ACHN (cell line): ENCODE measurements at regions of chr3 and their contacts with region 1.

Region 1: GRCh38 chr3:187739561-187740332 is 5.5 kb downstream of the BCL6 start:
- DNase-seq: peak; percentile 80

Region 2: DNA sequence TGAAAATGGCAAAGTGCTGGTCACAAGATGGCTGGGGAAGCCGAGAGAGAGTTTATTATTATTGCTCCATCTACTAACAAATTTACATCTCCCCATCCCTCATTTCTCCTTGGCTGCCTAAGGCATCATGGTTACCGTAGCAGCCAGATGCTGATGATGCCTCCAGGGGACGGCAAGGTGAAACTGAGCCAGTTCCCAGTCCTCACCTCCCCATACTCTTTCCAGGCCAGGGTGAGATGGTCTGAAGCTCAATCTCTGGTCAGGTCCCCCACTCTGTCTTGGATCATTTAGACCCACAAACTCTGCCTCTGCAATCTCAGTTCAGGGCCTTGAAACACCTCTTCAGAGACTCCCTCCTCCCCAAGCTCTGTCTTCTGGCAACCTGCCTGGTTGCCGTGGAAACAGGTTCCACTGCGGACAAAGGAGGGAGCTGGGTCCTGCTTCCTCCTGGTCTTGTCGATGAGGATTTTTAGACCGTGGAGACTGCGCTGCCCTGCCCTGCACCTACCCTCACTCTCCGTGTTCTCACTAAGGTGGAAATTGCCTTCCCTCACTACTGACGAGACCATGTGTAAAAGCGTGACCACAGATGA is 542.6 kb before region 1 on chr3 and contains the start of gene RTP1:
- in situ Hi-C with region 1: no loop called
- DNase-seq: no peak

Region 3: GRCh38 chr3:187870360-187871203 is 130.8 kb after region 1 on chr3:
- in situ Hi-C with region 1: no loop called
- DNase-seq: no peak

Region 4: DNA sequence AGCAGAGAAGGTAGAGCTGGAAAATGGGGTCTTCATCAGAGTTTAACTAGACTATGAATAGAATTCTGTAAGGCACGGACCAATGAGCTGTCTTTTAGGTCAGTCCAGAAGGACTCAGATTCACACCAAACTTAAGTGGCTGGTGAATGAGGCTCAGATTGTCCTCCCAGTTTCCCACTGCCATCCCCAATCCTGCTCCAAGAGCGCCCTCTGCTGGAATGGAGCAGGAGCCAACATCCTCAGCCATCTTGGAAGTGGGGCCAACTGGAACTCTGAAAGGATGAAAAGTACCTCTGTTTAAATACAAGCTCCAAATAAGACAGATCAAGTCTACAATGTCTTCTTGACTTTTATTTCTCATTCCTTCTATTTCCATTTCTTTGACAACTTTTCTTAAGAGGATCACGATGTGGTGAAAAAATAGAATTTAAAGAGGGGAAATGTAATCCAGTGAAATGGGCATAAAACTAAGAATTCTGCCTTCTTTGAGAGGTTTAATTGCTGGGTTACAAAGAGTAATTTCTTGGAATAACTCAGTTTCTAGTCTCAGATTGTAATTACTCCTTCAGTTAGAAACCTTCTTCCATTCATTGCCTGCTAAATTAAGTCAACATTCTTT is 1215.0 kb after region 1 on chr3:
- in situ Hi-C with region 1: loop called (anchors 5 kb)
- DNase-seq: peak; percentile 79